HepG2 (cell line): ENCODE measurements at regions of chr14 and their contacts with region 1.

Region 1: DNA sequence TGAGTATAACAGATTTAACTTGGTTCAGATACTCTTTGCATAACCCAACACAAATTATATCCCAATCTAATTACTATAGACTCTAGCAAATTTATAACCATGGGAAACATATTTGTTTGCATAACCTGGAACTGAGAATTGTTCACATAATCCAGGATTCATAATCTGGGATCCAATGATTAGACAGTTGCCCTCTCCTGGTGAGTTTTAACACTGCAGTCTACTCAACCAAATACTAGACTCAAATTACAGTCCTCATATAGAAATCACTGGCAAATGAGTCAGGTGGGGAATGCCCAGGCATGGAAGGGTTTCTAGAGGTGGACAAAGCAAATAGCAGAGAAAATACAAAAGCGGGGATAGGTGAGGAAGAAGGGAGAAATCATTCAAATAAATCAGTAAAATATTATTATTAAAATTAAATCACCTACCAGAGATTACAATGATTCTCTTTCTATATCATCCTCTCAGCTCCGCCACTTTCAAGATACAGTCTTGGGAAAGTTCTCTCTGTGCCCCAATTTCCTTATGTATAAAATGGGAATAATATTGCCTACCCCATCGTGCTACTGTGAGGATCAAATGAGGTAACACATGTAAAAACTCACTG is 9.4 kb downstream of the GCH1 start:
- DNase-seq: peak; percentile 50
- ATAC-seq: peak; percentile 58
- H3K4me3 ChIP-seq: no peak overlapping the region
- H3K27ac ChIP-seq: no peak overlapping the region
- H3K4me1 ChIP-seq: peaks cover 40% of the 10 kb centered on the region
- H3K27me3 ChIP-seq: no peaks in the 10 kb centered on the region
- CTCF ChIP-seq: peak; percentile 63
- EP300 ChIP-seq: no peak
- POLR2A ChIP-seq: no peak
- RAD21 ChIP-seq: no peak

Region 2: GRCh38 chr14:54348923-54349620 is 544.2 kb before region 1 on chr14:
- CTCF ChIA-PET with region 1: no interaction called
- POLR2A ChIA-PET with region 1: no interaction called
- in situ Hi-C with region 1: no loop called
- intact Hi-C with region 1: no loop called
- DNase-seq: no peak
- ATAC-seq: no peak
- H3K4me3 ChIP-seq: no peak overlapping the region
- H3K27ac ChIP-seq: no peak overlapping the region
- H3K4me1 ChIP-seq: peaks cover 52% of the 10 kb centered on the region
- H3K27me3 ChIP-seq: no peaks in the 10 kb centered on the region
- CTCF ChIP-seq: no peak
- EP300 ChIP-seq: no peak
- POLR2A ChIP-seq: no peak
- RAD21 ChIP-seq: no peak

Region 3: DNA sequence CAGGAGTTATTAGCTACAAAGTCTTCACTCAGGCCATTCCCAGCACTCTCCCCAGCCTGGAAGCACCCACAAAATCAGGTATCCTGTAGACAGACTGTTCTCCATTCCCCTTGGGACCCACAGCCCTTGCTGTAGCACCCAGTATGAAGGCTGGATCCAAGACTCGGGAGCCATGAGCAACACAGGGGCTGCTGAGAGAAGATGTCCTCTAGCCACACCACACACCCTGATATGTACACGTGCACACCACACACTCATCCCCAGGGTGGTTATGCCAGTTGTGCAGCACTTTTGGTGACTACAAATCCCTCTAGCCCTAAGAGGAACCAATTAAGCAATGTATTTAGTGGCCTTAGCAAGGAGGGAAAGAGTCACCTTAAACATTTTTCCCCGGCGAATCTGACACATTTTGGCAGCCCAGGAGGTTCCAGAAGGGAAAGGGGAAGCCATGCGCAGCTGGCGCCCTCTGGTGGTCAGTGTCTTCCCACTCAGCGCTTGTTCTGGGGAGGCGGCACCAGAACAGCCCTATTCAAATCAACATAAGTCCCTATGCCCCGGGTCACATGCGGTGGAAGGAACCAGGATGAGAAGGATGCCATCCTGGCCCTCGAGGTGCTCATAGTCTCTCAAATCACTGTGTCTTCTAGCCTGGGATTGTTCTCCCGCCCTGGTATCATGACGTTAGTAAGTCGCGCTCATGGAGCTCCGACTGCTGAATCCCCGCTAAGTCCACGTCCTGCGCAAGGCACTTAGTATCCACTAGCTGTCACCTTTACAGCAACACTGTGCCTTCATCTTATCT is 87.5 kb before region 1 on chr14:
- CTCF ChIA-PET with region 1: interaction called, 13 read pairs
- POLR2A ChIA-PET with region 1: no interaction called
- in situ Hi-C with region 1: no loop called
- intact Hi-C with region 1: loop called (anchors 5 kb)
- DNase-seq: peak; percentile 62
- ATAC-seq: peak; percentile 81
- H3K4me3 ChIP-seq: peak overlapping the region in 1 of 3 experiments; percentile 55; a peak in 3 of 6 replicates
- H3K27ac ChIP-seq: no peak overlapping the region
- H3K4me1 ChIP-seq: peaks cover 55% of the 10 kb centered on the region
- H3K27me3 ChIP-seq: no peaks in the 10 kb centered on the region
- CTCF ChIP-seq: peak; percentile 93
- EP300 ChIP-seq: no peak
- POLR2A ChIP-seq: no peak
- RAD21 ChIP-seq: peak; percentile 72

Region 4: GRCh38 chr14:55609681-55610080 is 716.4 kb after region 1 on chr14:
- CTCF ChIA-PET with region 1: no interaction called
- POLR2A ChIA-PET with region 1: no interaction called
- in situ Hi-C with region 1: no loop called
- intact Hi-C with region 1: no loop called
- DNase-seq: peak; percentile 13
- ATAC-seq: no peak
- H3K4me3 ChIP-seq: no peak overlapping the region
- H3K27ac ChIP-seq: no peak overlapping the region
- H3K4me1 ChIP-seq: peaks cover 46% of the 10 kb centered on the region
- H3K27me3 ChIP-seq: no peaks in the 10 kb centered on the region
- CTCF ChIP-seq: no peak
- EP300 ChIP-seq: no peak
- POLR2A ChIP-seq: no peak
- RAD21 ChIP-seq: no peak